K562 (cell line): ENCODE measurements at regions of chrX and their contacts with region 1.

Region 1: DNA sequence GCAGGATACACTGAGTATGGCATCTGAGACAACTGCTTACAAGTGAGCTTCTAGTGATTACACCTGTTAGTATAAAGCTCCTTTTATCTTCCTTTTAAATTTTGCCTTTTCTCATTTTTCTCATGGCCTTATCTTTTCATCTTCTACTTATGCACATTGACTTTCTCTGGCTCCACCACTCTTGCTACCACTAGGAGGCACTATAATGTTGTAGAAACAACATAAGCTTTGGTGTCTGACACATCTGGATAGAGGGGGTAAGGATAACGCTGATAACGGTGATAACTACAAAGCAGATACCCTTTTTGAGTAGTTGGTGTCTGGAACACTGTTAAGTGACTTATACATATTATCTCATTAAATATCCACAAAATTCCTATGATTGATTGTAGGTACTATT is 187.4 kb upstream of the TEX13C start:
- DNase-seq: peak; percentile 26 to 41 (median 30)
- ATAC-seq: peak; percentile 67
- H3K4me3 ChIP-seq: no peak overlapping the region
- H3K27ac ChIP-seq: no peak overlapping the region
- H3K4me1 ChIP-seq: no peaks in the 10 kb centered on the region
- H3K27me3 ChIP-seq: no peaks in the 10 kb centered on the region
- CTCF ChIP-seq: peak; percentile 49 to 57 (median 56); a peak in 5 of 6 replicates
- EP300 ChIP-seq: no peak
- POLR2A ChIP-seq: no peak
- RAD21 ChIP-seq: peak; percentile 49 to 71; a peak in 3 of 4 replicates

Region 2: DNA sequence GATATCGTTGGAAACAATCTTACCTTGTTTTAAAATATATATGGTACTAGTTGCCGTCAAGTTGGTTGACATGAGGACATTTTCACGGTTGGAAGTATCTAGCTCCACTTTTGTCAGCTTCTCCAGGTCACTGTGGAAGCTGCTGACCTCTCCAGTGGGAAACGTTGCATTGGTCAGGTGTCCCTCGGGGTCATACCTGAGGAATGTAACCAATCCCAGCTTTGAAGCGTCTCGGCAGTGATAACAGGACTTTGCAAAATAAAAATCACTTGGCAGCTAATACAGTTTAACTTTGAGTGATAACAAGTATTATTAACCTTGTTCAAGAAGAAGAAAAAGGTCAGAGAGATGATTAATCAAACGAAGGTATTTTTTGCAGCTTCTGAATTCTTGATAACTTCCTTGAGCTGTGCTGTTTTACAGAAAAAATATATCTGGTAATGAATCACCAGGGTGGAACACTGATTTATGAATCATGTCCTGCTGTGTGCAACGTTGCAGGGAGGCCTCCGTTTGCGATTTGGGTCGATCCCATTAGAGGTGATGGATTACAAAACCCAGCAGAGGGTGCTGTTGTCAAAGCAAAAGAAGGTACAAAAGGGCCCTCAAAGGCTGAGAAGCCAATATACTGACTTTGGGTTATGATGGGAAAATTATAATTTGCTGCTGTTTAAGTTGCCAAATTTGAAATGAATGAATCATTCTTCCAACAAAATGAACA is 725.8 kb before region 1 on chrX:
- CTCF ChIA-PET with region 1: interaction called, 10 read pairs
- POLR2A ChIA-PET with region 1: no interaction called
- in situ Hi-C with region 1: loop called (anchors 25 kb)
- intact Hi-C with region 1: loop called (anchors 1 kb)
- DNase-seq: peak; percentile 38 to 71 (median 56)
- ATAC-seq: peak; percentile 95
- H3K4me3 ChIP-seq: no peak overlapping the region
- H3K27ac ChIP-seq: no peak overlapping the region
- H3K4me1 ChIP-seq: no peaks in the 10 kb centered on the region; a peak in 1 of 5 replicates
- H3K27me3 ChIP-seq: no peaks in the 10 kb centered on the region
- CTCF ChIP-seq: peak; percentile 53 to 69 (median 63)
- EP300 ChIP-seq: no peak
- POLR2A ChIP-seq: no peak
- RAD21 ChIP-seq: peak; percentile 81 to 86

Region 3: GRCh38 chrX:125306335-125306866 is 174.1 kb after region 1 on chrX:
- CTCF ChIA-PET with region 1: no interaction called
- POLR2A ChIA-PET with region 1: no interaction called
- in situ Hi-C with region 1: no loop called
- intact Hi-C with region 1: loop called (anchors 10 kb)
- DNase-seq: no peak
- ATAC-seq: no peak
- H3K4me3 ChIP-seq: no peak overlapping the region
- H3K27ac ChIP-seq: no peak overlapping the region
- H3K4me1 ChIP-seq: no peaks in the 10 kb centered on the region
- H3K27me3 ChIP-seq: no peaks in the 10 kb centered on the region
- CTCF ChIP-seq: no peak
- EP300 ChIP-seq: no peak
- POLR2A ChIP-seq: no peak
- RAD21 ChIP-seq: no peak

Region 4: DNA sequence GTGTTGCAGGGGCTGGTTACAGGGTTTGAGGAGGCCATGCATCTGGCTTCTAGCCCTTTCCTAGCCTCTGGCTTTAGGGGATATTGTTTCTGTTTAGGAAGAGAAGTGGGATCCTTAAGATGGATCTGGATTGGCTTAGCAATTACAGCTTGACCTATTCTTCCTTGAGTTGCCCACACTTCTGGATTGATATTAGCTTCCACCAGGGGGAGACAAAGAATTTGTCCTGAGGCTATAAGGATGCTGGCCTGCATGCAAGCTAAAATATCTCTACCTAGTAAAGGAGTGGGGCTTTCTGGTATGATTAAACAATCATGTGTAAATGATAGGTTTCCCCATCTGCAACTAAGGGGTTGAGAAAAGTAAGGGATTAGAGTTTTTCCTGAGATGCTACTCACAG is 304.6 kb after region 1 on chrX:
- CTCF ChIA-PET with region 1: no interaction called
- POLR2A ChIA-PET with region 1: no interaction called
- in situ Hi-C with region 1: no loop called
- intact Hi-C with region 1: loop called (anchors 5 kb)
- DNase-seq: peak in 3 of 4 experiments; percentile 8 to 67 (median 10)
- ATAC-seq: peak; percentile 84
- H3K4me3 ChIP-seq: no peak overlapping the region
- H3K27ac ChIP-seq: no peak overlapping the region
- H3K4me1 ChIP-seq: peaks cover 0 to 13% of the 10 kb centered on the region in 2 experiments; a peak in 3 of 5 replicates
- H3K27me3 ChIP-seq: no peaks in the 10 kb centered on the region
- CTCF ChIP-seq: peak; percentile 44 to 57 (median 51)
- EP300 ChIP-seq: no peak
- POLR2A ChIP-seq: no peak
- RAD21 ChIP-seq: peak; percentile 42 to 80; a peak in 3 of 4 replicates